Transverse colon (tissue), 4 donors: ENCODE measurements at regions of chr3 and their contacts with region 1.

Region 1: GRCh38 chr3:98140531-98140930 is 6.7 kb upstream of the OR5H14 start:
- DNase-seq: no peak
- H3K4me3 ChIP-seq: no peak overlapping the region
- H3K27ac ChIP-seq: no peak overlapping the region
- H3K4me1 ChIP-seq: no peaks in the 10 kb centered on the region
- H3K27me3 ChIP-seq: no peaks in the 10 kb centered on the region
- CTCF ChIP-seq: no peak
- EP300 ChIP-seq: no peak
- POLR2A ChIP-seq: no peak

Region 2: GRCh38 chr3:98180319-98180890 is 39.9 kb after region 1 on chr3:
- in situ Hi-C with region 1: loop called in 1 of 4 experiments (anchors 5 kb)
- intact Hi-C with region 1: no loop called
- DNase-seq: no peak
- H3K4me3 ChIP-seq: no peak overlapping the region
- H3K27ac ChIP-seq: no peak overlapping the region
- H3K4me1 ChIP-seq: no peaks in the 10 kb centered on the region
- H3K27me3 ChIP-seq: no peaks in the 10 kb centered on the region
- CTCF ChIP-seq: no peak
- EP300 ChIP-seq: no peak
- POLR2A ChIP-seq: no peak